Activated CD4-positive, alpha-beta T cell treated with anti-CD3 and anti-CD28 coated beads for 36 hours (primary cell): ENCODE measurements at regions of chr15 and their contacts with region 1.

Region 1: GRCh38 chr15:49855917-49856637 is 235.2 kb downstream of the DTWD1 start:
- DNase-seq: no peak
- ATAC-seq: no peak
- H3K4me3 Mint-ChIP-seq: no peak overlapping the region
- H3K27ac Mint-ChIP-seq: no peak overlapping the region
- H3K4me1 Mint-ChIP-seq: no peaks in the 10 kb centered on the region
- H3K27me3 Mint-ChIP-seq: peaks cover 2% of the 10 kb centered on the region

Region 2: DNA sequence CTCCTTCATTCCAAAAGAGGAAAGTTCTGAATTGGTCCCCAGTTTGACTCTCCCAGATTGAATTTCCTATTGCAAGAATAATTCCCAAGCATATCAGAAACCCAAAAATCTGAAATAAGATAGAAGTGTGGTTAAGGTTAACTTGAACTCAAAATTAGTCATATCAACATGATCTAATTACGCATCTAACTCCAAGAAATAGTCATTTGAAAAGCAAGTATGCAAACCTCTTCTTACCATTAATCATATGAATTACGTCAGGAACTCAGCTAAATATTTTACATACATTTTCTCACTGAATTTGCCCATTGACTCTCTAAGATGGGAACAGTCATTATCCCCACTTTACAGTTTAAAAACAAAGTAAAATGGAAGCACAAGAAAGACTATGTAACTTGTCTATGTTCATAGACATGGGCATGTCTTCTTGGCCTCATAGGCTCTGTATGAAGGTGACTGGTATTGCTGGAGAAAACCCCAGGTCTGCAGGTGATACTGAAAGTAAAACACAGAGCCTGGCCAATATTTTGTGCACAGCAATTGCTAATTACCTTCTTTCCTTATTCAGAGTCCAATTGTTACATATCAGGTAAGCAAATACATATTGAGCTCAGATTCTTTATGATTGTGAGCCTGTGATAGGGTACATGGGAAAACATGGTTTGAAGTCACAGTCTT is 123.8 kb after region 1 on chr15:
- CTCF ChIA-PET with region 1: no interaction called
- POLR2A ChIA-PET with region 1: no interaction called
- intact Hi-C with region 1: no loop called
- DNase-seq: no peak
- ATAC-seq: peak; percentile 47
- H3K4me3 Mint-ChIP-seq: no peak overlapping the region
- H3K27ac Mint-ChIP-seq: no peak overlapping the region
- H3K4me1 Mint-ChIP-seq: no peaks in the 10 kb centered on the region
- H3K27me3 Mint-ChIP-seq: peaks cover 1% of the 10 kb centered on the region

Region 3: GRCh38 chr15:50116473-50116872 is 260.4 kb after region 1 on chr15:
- CTCF ChIA-PET with region 1: no interaction called
- POLR2A ChIA-PET with region 1: interaction called, 12 read pairs
- intact Hi-C with region 1: no loop called
- DNase-seq: peak; percentile 33
- ATAC-seq: peak; percentile 61
- H3K4me3 Mint-ChIP-seq: no peak overlapping the region
- H3K27ac Mint-ChIP-seq: no peak overlapping the region
- H3K4me1 Mint-ChIP-seq: peaks cover 11% of the 10 kb centered on the region
- H3K27me3 Mint-ChIP-seq: peaks cover 8% of the 10 kb centered on the region